ENCODE measurements at regions of chr11 and their contacts with region 1.

Region 1: GRCh38 chr11:74248469-74248868 is 63.0 kb downstream of the P4HA3 start:
- DNase-seq: no peak
- ATAC-seq: no peak
- H3K4me3 ChIP-seq: no peak overlapping the region
- H3K27ac ChIP-seq: no peak overlapping the region
- H3K4me1 ChIP-seq: no peaks in the 10 kb centered on the region
- H3K27me3 ChIP-seq: no peaks in the 10 kb centered on the region
- CTCF ChIP-seq: no peak
- EP300 ChIP-seq: no peak
- POLR2A ChIP-seq: no peak
- RAD21 ChIP-seq: no peak

Region 2: GRCh38 chr11:74325649-74326645 is 77.5 kb after region 1 on chr11:
- CTCF ChIA-PET with region 1: no interaction called
- POLR2A ChIA-PET with region 1: no interaction called
- in situ Hi-C with region 1: no loop called
- intact Hi-C with region 1: no loop called
- DNase-seq: no peak
- ATAC-seq: no peak
- H3K4me3 ChIP-seq: no peak overlapping the region
- H3K27ac ChIP-seq: no peak overlapping the region
- H3K4me1 ChIP-seq: peaks cover 3 to 8% of the 10 kb centered on the region in 2 experiments; a peak in 4 of 5 replicates
- H3K27me3 ChIP-seq: peaks cover 0 to 10% of the 10 kb centered on the region in 2 experiments; a peak in 2 of 5 replicates
- CTCF ChIP-seq: no peak
- EP300 ChIP-seq: no peak
- POLR2A ChIP-seq: no peak
- RAD21 ChIP-seq: no peak

Region 3: DNA sequence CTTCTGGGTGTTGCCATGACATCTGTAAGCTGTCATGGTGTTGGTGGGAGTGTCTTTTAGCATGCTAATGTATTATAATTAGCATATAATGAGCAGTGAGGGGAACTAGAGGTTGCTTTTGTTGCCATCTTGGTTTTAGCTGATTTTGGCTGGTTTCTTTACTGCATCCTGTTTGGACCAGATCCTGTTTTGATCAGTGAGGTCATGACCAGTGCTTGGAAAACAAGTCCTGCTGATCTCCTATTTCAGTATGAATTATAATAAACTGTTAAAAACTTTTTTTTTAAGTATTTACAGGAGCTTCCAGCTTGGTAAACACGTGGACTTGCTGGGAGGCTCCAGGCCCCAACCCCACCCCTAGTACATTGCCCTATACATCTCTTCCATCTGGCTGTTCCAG is 93.5 kb after region 1 on chr11:
- CTCF ChIA-PET with region 1: no interaction called
- POLR2A ChIA-PET with region 1: no interaction called
- in situ Hi-C with region 1: no loop called
- intact Hi-C with region 1: no loop called
- DNase-seq: no peak
- ATAC-seq: no peak
- H3K4me3 ChIP-seq: no peak overlapping the region
- H3K27ac ChIP-seq: no peak overlapping the region
- H3K4me1 ChIP-seq: no peaks in the 10 kb centered on the region
- H3K27me3 ChIP-seq: peaks cover 0 to 2% of the 10 kb centered on the region in 2 experiments; a peak in 1 of 5 replicates
- CTCF ChIP-seq: no peak
- EP300 ChIP-seq: no peak
- POLR2A ChIP-seq: no peak
- RAD21 ChIP-seq: no peak

Region 4: DNA sequence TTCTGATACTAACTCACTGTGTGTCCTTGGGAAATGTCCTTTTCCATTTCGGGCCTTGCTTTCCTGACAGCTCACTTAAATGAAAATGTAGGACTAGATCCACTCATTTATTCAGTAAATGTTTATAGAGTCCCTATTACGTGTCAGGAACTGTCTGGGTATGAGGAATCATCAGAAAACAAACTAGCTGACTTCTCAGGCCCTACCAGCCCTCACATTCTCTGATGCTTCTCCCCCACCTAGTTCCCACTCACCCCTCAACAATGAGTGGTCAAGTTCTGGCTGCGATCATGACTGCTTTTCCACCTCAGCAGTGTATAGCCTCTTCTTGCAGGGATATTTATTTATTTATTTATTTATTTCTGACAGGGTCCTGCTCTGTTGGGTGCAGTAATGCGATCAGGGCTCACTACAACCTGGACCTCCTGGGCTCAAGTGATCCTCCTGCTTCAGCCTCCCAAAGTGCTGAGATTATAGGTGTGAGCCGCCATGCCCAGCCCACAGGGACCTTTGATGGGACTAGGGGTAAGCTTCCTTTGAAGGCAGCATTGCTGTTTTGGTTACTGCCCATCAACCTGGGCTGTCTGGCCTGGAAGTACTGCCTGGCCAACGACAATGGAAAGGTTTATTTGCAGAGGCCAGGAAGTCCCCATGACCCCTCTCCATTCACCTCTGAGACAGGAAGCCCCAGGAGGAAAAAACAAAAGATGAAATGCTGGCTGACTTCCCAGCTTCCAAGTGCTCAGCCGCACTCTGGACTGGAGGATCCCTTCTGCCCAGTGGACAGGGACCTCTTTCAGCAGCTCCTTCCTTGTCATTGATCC is 310.9 kb after region 1 on chr11:
- CTCF ChIA-PET with region 1: interaction called, 3 read pairs
- POLR2A ChIA-PET with region 1: no interaction called
- in situ Hi-C with region 1: loop called (anchors 5 kb)
- intact Hi-C with region 1: no loop called
- DNase-seq: no peak
- ATAC-seq: no peak
- H3K4me3 ChIP-seq: no peak overlapping the region
- H3K27ac ChIP-seq: no peak overlapping the region
- H3K4me1 ChIP-seq: no peaks in the 10 kb centered on the region
- H3K27me3 ChIP-seq: peaks cover 7 to 11% of the 10 kb centered on the region in 2 experiments
- CTCF ChIP-seq: no peak
- EP300 ChIP-seq: no peak
- POLR2A ChIP-seq: no peak
- RAD21 ChIP-seq: no peak

Measured in K562 (cell line).